PC-9 (cell line): ENCODE measurements at regions of chr2 and their contacts with region 1.

Region 1: GRCh38 chr2:178298785-178299212 is 104.5 kb downstream of the OSBPL6 start:
- DNase-seq: peak; percentile 20 to 74
- H3K4me3 ChIP-seq: no peak overlapping the region
- H3K27ac ChIP-seq: peak overlapping the region; percentile 28
- H3K4me1 ChIP-seq: peaks cover 25% of the 10 kb centered on the region; the same call in 1 of the 2 replicates
- H3K27me3 ChIP-seq: no peaks in the 10 kb centered on the region
- CTCF ChIP-seq: no peak

Region 2: GRCh38 chr2:178280244-178280852 is 18.5 kb before region 1 on chr2:
- CTCF ChIA-PET with region 1: no interaction called
- POLR2A ChIA-PET with region 1: interaction called, 12 read pairs
- intact Hi-C with region 1: loop called (anchors 1 kb)
- DNase-seq: peak; percentile 19 to 66
- H3K4me3 ChIP-seq: no peak overlapping the region
- H3K27ac ChIP-seq: no peak overlapping the region
- H3K4me1 ChIP-seq: 0 out of 2 replicates have a peak, but pooled peaks cover 7% of the 10 kb centered on the region
- H3K27me3 ChIP-seq: no peaks in the 10 kb centered on the region
- CTCF ChIP-seq: peak; percentile 95

Region 3: GRCh38 chr2:178286636-178287035 is 12.2 kb before region 1 on chr2:
- CTCF ChIA-PET with region 1: interaction called, 9 read pairs
- POLR2A ChIA-PET with region 1: interaction called, 12 read pairs
- intact Hi-C with region 1: loop called (anchors 1 kb)
- DNase-seq: no peak
- H3K4me3 ChIP-seq: no peak overlapping the region
- H3K27ac ChIP-seq: no peak overlapping the region
- H3K4me1 ChIP-seq: 0 out of 2 replicates have a peak, but pooled peaks cover 7% of the 10 kb centered on the region
- H3K27me3 ChIP-seq: no peaks in the 10 kb centered on the region
- CTCF ChIP-seq: no peak

Region 4: DNA sequence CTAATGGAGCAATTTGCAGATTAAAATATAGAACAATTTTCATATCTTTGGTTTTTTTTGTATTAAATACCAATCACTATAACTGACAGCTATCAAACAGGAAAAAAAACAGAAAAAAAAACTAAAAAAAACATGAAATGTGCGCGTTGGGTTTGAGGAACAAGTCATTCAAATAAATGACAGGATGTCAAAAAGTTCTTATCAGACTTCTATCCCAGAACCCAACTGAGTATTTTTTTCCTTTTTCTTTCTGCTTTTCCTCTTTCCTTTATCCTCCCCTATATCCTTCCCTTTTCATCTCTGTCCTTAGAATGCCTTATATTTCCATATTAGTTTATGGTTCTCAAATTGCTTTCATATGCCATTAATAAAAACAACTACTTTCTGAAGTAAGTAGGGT is 137.9 kb after region 1 on chr2:
- CTCF ChIA-PET with region 1: no interaction called
- POLR2A ChIA-PET with region 1: interaction called, 25 read pairs
- intact Hi-C with region 1: no loop called
- DNase-seq: no peak
- H3K4me3 ChIP-seq: no peak overlapping the region
- H3K27ac ChIP-seq: no peak overlapping the region
- H3K4me1 ChIP-seq: no peaks in the 10 kb centered on the region
- H3K27me3 ChIP-seq: no peaks in the 10 kb centered on the region
- CTCF ChIP-seq: no peak

Region 5: GRCh38 chr2:178522950-178523595 is 224.3 kb after region 1 on chr2:
- CTCF ChIA-PET with region 1: no interaction called
- POLR2A ChIA-PET with region 1: no interaction called
- intact Hi-C with region 1: loop called (anchors 10 kb)
- DNase-seq: peak; percentile 85 to 92
- H3K4me3 ChIP-seq: peak overlapping the region; percentile 78
- H3K27ac ChIP-seq: peak overlapping the region; percentile 30
- H3K4me1 ChIP-seq: peaks cover 10% of the 10 kb centered on the region
- H3K27me3 ChIP-seq: no peaks in the 10 kb centered on the region
- CTCF ChIP-seq: peak; percentile 97